GM10248 (cell line): ENCODE measurements at regions of chr16 and their contacts with region 1.

Region 1: DNA sequence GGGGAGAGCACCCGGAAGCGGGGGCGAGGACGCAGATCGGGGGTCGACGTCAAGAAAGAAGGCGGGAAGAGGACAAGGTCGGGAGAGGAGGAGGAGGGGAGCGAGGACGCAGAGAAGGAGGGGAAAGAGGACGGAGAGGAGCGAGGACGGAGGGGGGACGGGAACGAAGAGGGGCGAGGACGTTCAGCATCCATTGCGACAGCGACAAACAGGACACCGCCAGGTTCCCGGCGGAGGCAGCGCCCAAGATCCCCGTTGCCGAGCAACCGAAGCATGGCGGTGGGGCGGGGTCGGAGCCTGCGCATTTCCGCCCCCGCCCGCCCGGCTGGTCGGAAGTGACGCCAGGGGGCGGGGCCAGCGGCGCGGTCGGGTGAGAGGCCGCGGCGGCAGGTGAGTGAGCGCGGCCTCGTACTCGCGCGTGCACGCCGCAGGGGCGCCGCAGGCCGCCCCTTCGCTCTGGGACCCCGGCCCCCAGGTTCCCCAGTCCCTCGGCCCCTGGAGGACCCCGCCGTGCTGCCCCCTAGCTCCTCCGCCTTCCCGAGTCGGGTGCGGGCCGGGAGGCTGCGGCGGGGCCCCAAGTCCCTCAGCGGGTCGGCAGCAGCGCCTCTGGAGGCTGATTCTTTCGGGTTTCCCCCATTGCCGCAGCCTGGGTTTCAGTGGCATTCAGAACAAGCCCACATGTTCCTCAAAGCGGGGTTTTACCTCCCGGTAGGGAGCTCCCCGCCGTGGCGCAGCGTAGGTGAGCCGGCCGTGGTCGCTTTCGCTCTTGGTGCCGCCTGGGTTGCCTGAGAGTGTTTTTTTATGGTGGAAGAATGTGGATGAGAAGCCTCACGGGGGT is at the start of gene FAM234A:
- DNase-seq: peak; percentile 96
- CTCF ChIP-seq: peak; percentile 30

Region 2: DNA sequence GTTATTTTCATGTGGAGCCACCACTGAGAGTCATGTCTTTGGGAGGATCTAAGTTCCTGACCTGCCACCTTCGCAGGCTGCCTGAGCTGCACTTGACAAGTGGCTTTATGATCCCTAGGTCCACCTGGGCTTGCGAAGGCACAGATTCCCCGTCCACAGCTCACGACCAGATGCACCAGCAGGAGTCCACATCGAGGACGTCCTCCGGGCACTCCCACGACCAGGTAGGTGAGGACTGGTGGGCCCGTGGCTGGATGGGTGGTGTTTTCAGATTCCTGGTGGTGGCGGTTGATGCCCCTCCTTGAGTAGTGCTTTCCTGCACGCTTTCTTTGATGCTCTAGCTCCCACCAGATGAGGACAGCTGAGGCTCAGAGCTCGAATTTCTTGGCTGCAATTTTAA is 14.7 kb after region 1 on chr16:
- CTCF ChIA-PET with region 1: interaction called, 10 read pairs
- POLR2A ChIA-PET with region 1: no interaction called
- DNase-seq: no peak
- CTCF ChIP-seq: no peak